ENCODE measurements at regions of chr1 and their contacts with region 1.

Region 1: DNA sequence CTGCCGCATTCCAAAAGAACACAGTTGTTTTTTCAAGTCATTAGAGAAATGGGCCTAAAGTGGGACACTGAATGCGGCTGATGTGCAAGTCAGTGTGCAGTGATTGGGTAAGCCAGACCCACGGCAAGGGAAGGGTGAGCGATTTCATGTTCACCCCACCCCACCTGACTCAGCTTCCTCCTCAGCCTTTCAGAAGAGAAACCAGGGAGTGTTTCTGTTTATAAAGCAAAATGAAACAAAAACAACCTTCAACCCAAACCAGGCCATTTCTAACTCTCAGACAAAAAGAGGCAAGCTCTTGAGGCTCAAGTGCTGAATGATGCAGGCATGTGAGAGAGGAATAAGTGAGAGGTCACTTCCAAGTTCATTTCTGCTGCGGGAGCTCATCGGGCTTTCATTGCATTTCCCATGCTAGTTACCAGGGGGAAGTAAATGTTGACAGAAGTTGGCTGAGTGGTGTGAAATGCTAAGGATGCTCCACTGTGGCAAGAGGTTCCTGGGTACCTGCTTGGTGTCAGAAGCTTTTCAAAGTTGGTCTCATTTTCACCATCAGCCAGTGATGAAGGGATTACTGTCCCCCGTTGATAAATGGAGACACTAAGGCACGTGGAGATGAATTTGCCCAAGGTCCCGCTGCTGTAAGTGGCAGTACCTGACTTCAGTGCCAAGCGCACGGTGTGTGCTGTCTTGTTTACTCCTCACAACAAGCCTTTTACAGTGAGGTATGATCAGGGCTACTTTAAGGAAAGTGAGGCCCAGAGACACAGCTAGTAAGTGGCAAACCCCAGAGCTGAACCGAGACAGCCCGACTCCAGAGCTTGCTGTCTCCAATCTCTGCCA is 29.1 kb downstream of the STPG1 start:
- DNase-seq: peak; percentile 28
- H3K4me3 Mint-ChIP-seq: peak overlapping the region; percentile 3
- H3K27ac Mint-ChIP-seq: peak overlapping the region; percentile 71
- H3K4me1 Mint-ChIP-seq: peaks cover 26% of the 10 kb centered on the region
- H3K27me3 Mint-ChIP-seq: no peaks in the 10 kb centered on the region

Region 2: DNA sequence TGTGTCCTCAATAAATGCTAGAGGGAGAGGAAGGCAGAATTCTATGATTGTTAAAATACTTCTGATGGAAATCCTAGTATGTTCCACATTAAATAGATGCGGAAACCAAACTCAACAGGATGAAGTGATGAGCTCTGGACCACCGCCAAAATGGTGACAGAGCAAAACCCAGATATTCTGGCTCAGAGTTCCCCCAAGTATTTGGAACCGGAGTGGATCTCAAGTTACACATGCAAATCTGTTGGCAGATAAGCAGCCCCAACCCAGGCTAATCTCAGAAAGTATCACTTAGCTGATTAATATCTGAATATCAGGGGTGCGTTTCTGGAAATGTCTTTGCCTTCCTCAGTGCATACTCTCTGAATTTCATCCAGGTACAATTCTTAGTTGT is 82.7 kb before region 1 on chr1:
- intact Hi-C with region 1: no loop called
- DNase-seq: no peak
- H3K4me3 Mint-ChIP-seq: no peak overlapping the region
- H3K27ac Mint-ChIP-seq: no peak overlapping the region
- H3K4me1 Mint-ChIP-seq: no peaks in the 10 kb centered on the region
- H3K27me3 Mint-ChIP-seq: peaks cover 48% of the 10 kb centered on the region

Region 3: DNA sequence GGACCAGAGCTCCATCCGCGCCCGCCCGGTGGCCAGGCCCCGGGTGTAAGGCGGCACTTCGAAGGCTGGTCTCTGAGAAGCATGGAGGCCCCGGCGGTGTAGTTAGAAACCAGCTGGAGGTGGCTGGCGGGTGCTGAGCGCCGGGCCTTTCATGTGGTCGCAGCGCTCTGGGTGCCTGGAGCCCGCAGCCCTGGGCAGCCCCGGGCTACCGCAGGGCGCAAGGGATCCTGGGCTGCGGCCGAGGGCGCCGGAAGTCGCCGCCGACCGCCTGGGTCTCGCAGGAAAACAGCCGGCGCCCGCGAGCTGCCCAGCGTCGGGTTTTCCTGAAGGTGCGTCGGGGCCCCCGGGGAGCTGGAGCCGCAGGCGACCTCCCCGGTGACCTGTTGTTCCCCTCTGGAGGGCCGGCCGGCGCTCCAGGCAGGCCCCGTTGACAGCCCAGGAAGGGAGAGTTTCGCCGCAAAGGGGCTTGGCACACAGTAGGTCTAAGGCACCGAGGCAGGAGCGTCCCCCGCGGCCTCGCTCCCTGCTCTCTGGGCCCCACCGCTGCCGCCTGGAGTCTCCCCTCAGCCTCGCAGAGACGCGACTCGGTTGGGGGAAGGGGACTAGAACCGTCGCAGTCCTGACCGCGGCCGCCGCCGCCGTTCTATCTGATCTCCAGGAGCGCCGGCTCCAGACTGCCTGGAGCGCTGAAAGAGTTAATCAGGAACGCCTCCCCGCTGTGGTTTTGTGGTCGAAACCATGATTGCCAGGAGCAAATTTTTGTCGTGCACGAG is 62.6 kb before region 1 on chr1:
- intact Hi-C with region 1: loop called (anchors 1 kb)
- DNase-seq: peak; percentile 82
- H3K4me3 Mint-ChIP-seq: peak overlapping the region; percentile 67
- H3K27ac Mint-ChIP-seq: peak overlapping the region; percentile 43
- H3K4me1 Mint-ChIP-seq: peaks cover 26% of the 10 kb centered on the region
- H3K27me3 Mint-ChIP-seq: peaks cover 86% of the 10 kb centered on the region

Measured in activated T-helper 2 cell treated with anti-CD3 and anti-CD28 coated beads, Interferon-gamma antibody, Interleukin-2, Interleukin-4, amounts not matched to agents 10 μg/mL and 5 μg/mL and 100 μg/mL, durations not matched to agents 14 hours and 24 hours and 36 hours (primary cell).